ENCODE measurements at regions of chr15 and their contacts with region 1.

Region 1: GRCh38 chr15:65856821-65857455 is 12.4 kb upstream of the RAB11A start:
- DNase-seq: peak; percentile 93
- H3K4me3 ChIP-seq: no peak overlapping the region
- H3K27ac ChIP-seq: no peak overlapping the region
- H3K4me1 ChIP-seq: no peaks in the 10 kb centered on the region
- H3K27me3 ChIP-seq: no peaks in the 10 kb centered on the region
- CTCF ChIP-seq: peak; percentile 69 to 90 (median 83)
- EP300 ChIP-seq: no peak
- POLR2A ChIP-seq: no peak

Region 2: GRCh38 chr15:65450556-65450955 is 406.4 kb before region 1 on chr15:
- intact Hi-C with region 1: no loop called
- DNase-seq: no peak
- H3K4me3 ChIP-seq: no peak overlapping the region
- H3K27ac ChIP-seq: no peak overlapping the region
- H3K4me1 ChIP-seq: no peaks in the 10 kb centered on the region
- H3K27me3 ChIP-seq: no peaks in the 10 kb centered on the region
- CTCF ChIP-seq: no peak
- EP300 ChIP-seq: no peak
- POLR2A ChIP-seq: no peak

Region 3: GRCh38 chr15:65638681-65639089 is 218.3 kb before region 1 on chr15:
- intact Hi-C with region 1: loop called (anchors 5 kb)
- DNase-seq: no peak
- H3K4me3 ChIP-seq: peak overlapping the region in 2 of 4 donors; percentile 9 to 39
- H3K27ac ChIP-seq: no peak overlapping the region
- H3K4me1 ChIP-seq: peaks cover 5 to 22% (median 14%) of the 10 kb centered on the region in 4 donors
- H3K27me3 ChIP-seq: no peaks in the 10 kb centered on the region
- CTCF ChIP-seq: peak; percentile 73 to 81 (median 74)
- EP300 ChIP-seq: no peak
- POLR2A ChIP-seq: no peak

Region 4: DNA sequence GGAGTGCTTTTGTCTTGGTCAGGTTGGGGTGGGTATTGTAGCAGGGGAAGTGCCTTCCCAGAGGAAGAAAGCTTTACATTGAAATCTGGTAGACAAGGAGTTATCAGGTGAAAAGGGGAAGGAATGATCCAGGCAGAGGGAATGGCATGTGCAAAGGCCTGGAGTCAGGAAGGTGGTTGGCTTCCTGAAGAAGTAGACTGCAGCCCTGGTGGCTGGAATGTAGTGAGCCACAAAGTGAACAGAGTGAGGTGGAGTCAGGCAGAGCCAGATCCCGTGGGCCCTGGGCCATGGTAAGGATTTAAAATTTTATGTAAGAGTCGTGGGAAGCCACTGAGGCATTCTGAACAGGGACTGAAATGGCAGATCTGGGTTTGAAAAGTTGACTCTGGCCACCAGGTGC is 70.6 kb after region 1 on chr15:
- intact Hi-C with region 1: no loop called
- DNase-seq: no peak
- H3K4me3 ChIP-seq: no peak overlapping the region
- H3K27ac ChIP-seq: no peak overlapping the region
- H3K4me1 ChIP-seq: no peaks in the 10 kb centered on the region
- H3K27me3 ChIP-seq: no peaks in the 10 kb centered on the region
- CTCF ChIP-seq: no peak
- EP300 ChIP-seq: no peak
- POLR2A ChIP-seq: no peak